PC-3 (cell line): ENCODE measurements at regions of chr10 and their contacts with region 1.

Region 1: GRCh38 chr10:103918053-103918846 is at the start of gene STN1:
- DNase-seq: peak; percentile 90
- ATAC-seq: peak; percentile 90
- H3K4me3 ChIP-seq: peak within 1 kb of the TSS; percentile 72
- H3K27ac ChIP-seq: peak within 1 kb of the TSS; percentile 89
- H3K4me1 ChIP-seq: peaks cover 32% of the 10 kb centered on the region
- H3K27me3 ChIP-seq: no peaks in the 10 kb centered on the region
- CTCF ChIP-seq: no peak
- total RNA-seq, gene STN1: 20.0 and 33.5 TPM in 2 replicates

Region 2: DNA sequence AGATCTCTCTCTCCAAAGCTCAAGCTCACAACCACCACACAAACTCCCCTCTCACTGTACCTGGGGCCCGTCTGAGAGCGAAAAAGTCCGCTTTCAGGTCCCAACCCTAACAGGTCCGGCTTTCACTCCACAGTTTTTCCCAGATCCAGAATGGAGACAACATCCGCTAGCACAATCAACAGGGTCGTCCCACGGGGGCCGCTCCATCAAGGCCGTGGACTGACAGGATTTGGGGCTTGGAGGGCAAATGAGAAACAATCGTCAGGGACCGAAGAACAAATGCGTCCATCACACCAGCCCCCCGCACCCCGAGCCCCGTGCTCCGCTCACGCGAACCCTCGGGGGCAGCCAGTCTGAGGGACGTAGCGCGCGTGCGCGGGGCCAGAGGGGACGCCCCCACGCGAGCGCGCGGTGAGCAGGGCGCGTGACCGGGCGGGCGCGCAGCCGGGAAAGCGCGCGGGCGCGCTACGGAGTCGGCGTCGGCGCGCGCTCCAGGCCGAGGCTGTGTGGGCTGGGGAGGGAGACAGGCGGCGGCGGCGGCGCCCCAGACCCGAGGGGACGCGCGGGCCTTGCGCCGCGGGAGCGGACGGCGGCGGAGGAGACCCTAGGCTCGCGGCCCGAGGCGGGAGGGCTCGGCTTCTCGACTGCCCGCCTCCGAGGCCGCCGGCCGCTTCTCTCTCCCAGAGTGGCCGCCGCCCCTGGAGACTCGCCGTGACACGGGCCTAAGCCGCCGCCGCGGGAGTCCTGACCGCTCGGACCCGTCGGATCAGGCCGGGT is 48.6 kb after region 1 on chr10 and contains the start of gene SLK:
- CTCF ChIA-PET with region 1: no interaction called
- POLR2A ChIA-PET with region 1: interaction called, 5 read pairs
- intact Hi-C with region 1: loop called (anchors 2 kb)
- DNase-seq: peak; percentile 80
- ATAC-seq: peak; percentile 65
- H3K4me3 ChIP-seq: peak within 1 kb of the TSS; percentile 89
- H3K27ac ChIP-seq: peak within 1 kb of the TSS; percentile 48
- H3K4me1 ChIP-seq: peaks cover 20% of the 10 kb centered on the region
- H3K27me3 ChIP-seq: no peaks in the 10 kb centered on the region
- CTCF ChIP-seq: no peak
- total RNA-seq, gene SLK: 17.3 and 20.2 TPM in 2 replicates

Region 3: DNA sequence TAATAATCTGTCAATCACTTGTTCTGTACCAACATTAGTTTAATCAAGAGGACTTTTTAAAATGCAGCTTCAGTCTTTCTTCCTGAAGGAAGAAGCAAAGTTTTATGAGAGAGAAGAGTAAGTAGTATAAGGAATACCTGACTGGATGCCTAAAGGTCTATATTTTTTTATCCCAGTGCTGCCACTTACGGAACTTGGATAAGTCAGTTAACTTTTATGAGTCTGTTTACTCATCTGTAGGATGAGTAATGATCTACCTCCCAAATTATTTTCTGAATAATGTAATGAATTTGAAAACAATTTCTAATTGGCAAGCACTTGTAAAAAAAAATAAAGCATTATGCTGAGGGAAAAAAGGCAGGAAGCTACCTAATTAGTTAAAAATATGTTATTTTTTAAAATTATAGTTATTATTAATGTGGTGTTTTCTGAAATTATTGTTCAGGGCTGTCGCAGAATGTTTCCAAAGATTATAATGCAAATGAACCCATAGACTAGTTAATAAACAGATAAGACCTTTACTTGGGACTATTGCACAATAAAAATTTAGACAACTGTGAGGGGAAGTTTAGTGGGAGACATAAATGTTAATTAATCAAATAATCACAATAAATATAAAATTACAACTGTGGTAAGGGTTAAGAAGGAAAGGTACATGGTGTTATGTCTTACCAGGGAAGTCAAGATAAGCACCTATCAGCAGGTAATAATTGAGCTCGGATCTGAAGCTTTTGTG is 73.3 kb after region 1 on chr10:
- CTCF ChIA-PET with region 1: no interaction called
- POLR2A ChIA-PET with region 1: interaction called, 12 read pairs
- intact Hi-C with region 1: no loop called
- DNase-seq: peak; percentile 51
- ATAC-seq: peak; percentile 84
- H3K4me3 ChIP-seq: no peak overlapping the region
- H3K27ac ChIP-seq: no peak overlapping the region
- H3K4me1 ChIP-seq: peaks cover 12% of the 10 kb centered on the region; the same call in 1 of the 2 replicates
- H3K27me3 ChIP-seq: no peaks in the 10 kb centered on the region
- CTCF ChIP-seq: no peak